ENCODE measurements at regions of chr14 and their contacts with region 1.

Region 1: DNA sequence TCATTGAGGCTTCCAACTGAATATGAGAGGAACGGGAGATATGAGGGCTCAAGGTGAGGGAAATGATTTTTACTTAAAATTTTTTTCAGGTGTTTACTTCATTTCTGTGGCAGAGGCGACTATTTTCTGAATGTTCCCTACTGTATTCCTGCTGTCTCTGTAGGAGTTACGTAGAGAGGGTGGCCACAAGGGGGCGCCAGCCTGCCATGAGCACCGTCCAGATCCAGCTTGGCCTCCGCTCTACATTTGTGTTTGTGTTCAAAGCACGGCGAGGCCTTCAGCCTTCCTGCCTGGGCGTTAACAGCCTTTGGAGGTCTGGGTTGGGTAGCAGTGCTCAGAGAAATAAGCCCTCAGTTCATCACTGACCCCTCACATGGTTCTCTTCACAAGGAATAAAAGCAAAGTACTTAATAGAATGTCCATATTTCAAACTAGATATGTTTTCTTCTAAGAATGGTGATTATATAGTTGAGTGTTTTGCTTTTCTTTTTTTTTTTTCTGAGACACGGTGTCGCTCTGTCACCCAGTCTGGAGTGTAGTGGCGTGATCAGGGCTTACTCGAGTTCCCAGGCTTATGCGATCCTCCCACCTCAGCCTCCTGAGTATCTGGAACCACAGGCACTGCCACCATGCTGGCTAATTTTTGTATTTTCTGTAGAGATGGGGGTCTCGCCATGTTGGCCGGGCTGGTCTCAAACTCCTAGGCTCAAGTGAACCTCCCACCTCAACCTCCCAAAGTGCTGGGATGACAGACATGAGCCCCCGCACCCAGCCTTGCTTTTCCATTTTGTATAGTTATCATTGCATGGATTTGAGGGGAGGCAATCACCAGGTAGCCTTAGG is 22.3 kb downstream of the CKB start:
- DNase-seq: peak; percentile 55
- H3K27ac ChIP-seq: peak overlapping the region; percentile 72
- CTCF ChIP-seq: peak; percentile 95

Region 2: GRCh38 chr14:103485504-103485903 is 14.9 kb before region 1 on chr14:
- CTCF ChIA-PET with region 1: interaction called, 13 read pairs
- POLR2A ChIA-PET with region 1: no interaction called
- DNase-seq: no peak
- H3K27ac ChIP-seq: no peak overlapping the region
- CTCF ChIP-seq: no peak

Region 3: DNA sequence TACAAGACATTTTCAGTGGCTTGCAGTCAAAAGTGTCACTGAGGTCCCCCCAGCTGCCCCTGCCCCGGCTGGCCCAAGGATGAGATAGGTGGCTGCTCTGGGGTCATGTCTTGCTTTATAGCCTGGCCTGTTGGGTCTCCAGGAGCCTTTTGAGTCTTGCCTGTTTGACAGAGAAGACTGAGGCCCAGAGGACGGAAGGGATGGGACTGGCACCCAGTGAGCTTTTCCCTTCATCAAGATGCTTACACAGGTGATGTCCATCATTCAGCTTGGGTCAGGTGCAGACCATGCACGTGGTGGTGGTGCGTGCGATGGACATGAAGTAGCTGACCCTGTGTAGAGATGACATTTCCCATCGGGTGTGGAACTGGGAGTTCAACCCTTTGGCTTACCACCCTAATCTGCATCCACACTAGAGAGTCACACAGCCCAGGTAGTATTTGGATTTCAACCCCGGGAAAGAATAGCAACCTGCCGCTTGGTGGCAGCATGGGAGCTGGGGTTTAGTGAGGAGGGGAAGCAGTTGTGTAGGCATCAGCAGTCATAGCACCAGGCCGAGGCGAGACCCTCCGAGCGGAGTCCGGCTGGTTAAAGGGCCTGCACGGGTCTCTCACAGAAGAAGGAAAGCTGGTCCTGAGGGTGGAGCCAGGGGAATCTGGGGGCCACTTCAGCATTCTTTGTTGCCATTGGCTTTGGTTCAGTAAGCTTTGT is 10.1 kb after region 1 on chr14:
- CTCF ChIA-PET with region 1: interaction called, 12 read pairs
- POLR2A ChIA-PET with region 1: no interaction called
- DNase-seq: no peak
- H3K27ac ChIP-seq: peak overlapping the region; percentile 100
- CTCF ChIP-seq: no peak

Region 4: GRCh38 chr14:103546652-103547454 is 46.5 kb after region 1 on chr14:
- CTCF ChIA-PET with region 1: interaction called, 16 read pairs
- POLR2A ChIA-PET with region 1: no interaction called
- DNase-seq: peak; percentile 78
- H3K27ac ChIP-seq: peak overlapping the region; percentile 97
- CTCF ChIP-seq: peak; percentile 84